ENCODE measurements at regions of chr15 and their contacts with region 1.

Region 1: GRCh38 chr15:63504247-63504978 is at the start of gene USP3:
- DNase-seq: no peak
- ATAC-seq: peak; percentile 72
- H3K4me3 ChIP-seq: peak within 1 kb of the TSS; percentile 96
- H3K27ac ChIP-seq: peak within 1 kb of the TSS; percentile 100
- H3K4me1 ChIP-seq: peaks cover 30% of the 10 kb centered on the region
- H3K27me3 ChIP-seq: no peaks in the 10 kb centered on the region
- CTCF ChIP-seq: peak in 2 of 3 experiments; percentile 30 to 39; a peak in 4 of 6 replicates
- EP300 ChIP-seq: peak in 1 of 2 experiments; percentile 50; a peak in 3 of 4 replicates
- POLR2A ChIP-seq: peak; percentile 85
- RAD21 ChIP-seq: peak; percentile 30
- polyA plus RNA-seq, gene USP3: 23.8 to 45.7 TPM

Region 2: GRCh38 chr15:63056794-63057193 is 447.6 kb before region 1 on chr15:
- CTCF ChIA-PET with region 1: no interaction called
- POLR2A ChIA-PET with region 1: no interaction called
- RAD21 ChIA-PET with region 1: no interaction called
- SMC1A ChIA-PET with region 1: no interaction called
- in situ Hi-C with region 1: no loop called
- intact Hi-C with region 1: no loop called
- DNase-seq: no peak
- ATAC-seq: no peak
- H3K4me3 ChIP-seq: no peak overlapping the region
- H3K27ac ChIP-seq: no peak overlapping the region
- H3K4me1 ChIP-seq: no peaks in the 10 kb centered on the region
- H3K27me3 ChIP-seq: no peaks in the 10 kb centered on the region
- CTCF ChIP-seq: no peak
- EP300 ChIP-seq: no peak
- POLR2A ChIP-seq: no peak
- RAD21 ChIP-seq: no peak

Region 3: GRCh38 chr15:63188926-63189871 is 315.2 kb before region 1 on chr15 and contains the start of gene RAB8B:
- CTCF ChIA-PET with region 1: interaction called, 4 read pairs
- POLR2A ChIA-PET with region 1: no interaction called
- RAD21 ChIA-PET with region 1: interaction called, 4 read pairs
- SMC1A ChIA-PET with region 1: no interaction called
- in situ Hi-C with region 1: no loop called
- intact Hi-C with region 1: loop called (anchors 10 kb)
- DNase-seq: peak; percentile 67
- ATAC-seq: peak; percentile 83
- H3K4me3 ChIP-seq: peak within 1 kb of the TSS; percentile 96
- H3K27ac ChIP-seq: peak within 1 kb of the TSS; percentile 86
- H3K4me1 ChIP-seq: peaks cover 20% of the 10 kb centered on the region
- H3K27me3 ChIP-seq: no peaks in the 10 kb centered on the region
- CTCF ChIP-seq: 0 out of 6 replicates have a peak, but pooled peaks of 1 of the 3 experiments have one; percentile 4
- EP300 ChIP-seq: 0 out of 4 replicates have a peak, but pooled peaks of 1 of the 2 experiments have one; percentile 10
- POLR2A ChIP-seq: peak; percentile 89
- RAD21 ChIP-seq: no peak
- polyA plus RNA-seq, gene RAB8B: 17.8 to 26.0 TPM

Region 4: GRCh38 chr15:63481105-63481810 is 23.2 kb before region 1 on chr15:
- CTCF ChIA-PET with region 1: interaction called, 47 read pairs
- POLR2A ChIA-PET with region 1: interaction called, 110 read pairs
- RAD21 ChIA-PET with region 1: interaction called, 197 read pairs
- SMC1A ChIA-PET with region 1: interaction called, 151 read pairs
- in situ Hi-C with region 1: no loop called
- intact Hi-C with region 1: no loop called
- DNase-seq: peak; percentile 83
- ATAC-seq: peak; percentile 60
- H3K4me3 ChIP-seq: no peak overlapping the region
- H3K27ac ChIP-seq: peak overlapping the region; percentile 77
- H3K4me1 ChIP-seq: peaks cover 88% of the 10 kb centered on the region
- H3K27me3 ChIP-seq: no peaks in the 10 kb centered on the region
- CTCF ChIP-seq: 0 out of 6 replicates have a peak, but pooled peaks of 1 of the 3 experiments have one; percentile 4
- EP300 ChIP-seq: 0 out of 4 replicates have a peak, but pooled peaks of 1 of the 2 experiments have one; percentile 23
- POLR2A ChIP-seq: no peak
- RAD21 ChIP-seq: no peak

Region 5: DNA sequence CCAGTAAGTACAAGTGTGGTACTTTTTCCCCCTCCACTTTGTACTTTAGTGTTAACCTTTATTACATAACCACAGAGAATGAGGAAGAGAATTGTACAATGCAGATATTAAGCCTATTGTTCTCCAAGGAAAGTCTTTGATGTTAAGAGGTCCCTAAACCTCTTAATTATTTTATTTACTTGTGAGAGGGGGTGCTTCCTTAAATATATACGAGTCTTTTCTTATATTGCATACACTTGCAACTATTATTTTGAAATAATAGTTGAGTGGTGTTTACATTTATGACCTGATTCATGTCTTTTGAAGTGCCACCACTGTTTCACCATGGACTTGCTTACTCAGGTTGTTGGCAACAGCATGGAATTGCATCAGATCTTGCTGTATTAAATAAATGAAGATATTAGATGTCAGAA is 10.1 kb after region 1 on chr15:
- CTCF ChIA-PET with region 1: interaction called, 17 read pairs
- POLR2A ChIA-PET with region 1: interaction called, 9 read pairs
- RAD21 ChIA-PET with region 1: interaction called, 16 read pairs
- SMC1A ChIA-PET with region 1: interaction called, 46 read pairs
- in situ Hi-C with region 1: no loop called
- intact Hi-C with region 1: no loop called
- DNase-seq: no peak
- ATAC-seq: 0 out of 3 replicates have a peak, but pooled peaks have one; percentile 12
- H3K4me3 ChIP-seq: 0 out of 2 replicates have a peak overlapping the region, but pooled peaks have one; percentile 21
- H3K27ac ChIP-seq: peak overlapping the region; percentile 67; the same call in 1 of the 2 replicates
- H3K4me1 ChIP-seq: peaks cover 45% of the 10 kb centered on the region
- H3K27me3 ChIP-seq: no peaks in the 10 kb centered on the region
- CTCF ChIP-seq: no peak
- EP300 ChIP-seq: no peak
- POLR2A ChIP-seq: no peak
- RAD21 ChIP-seq: no peak

Region 6: DNA sequence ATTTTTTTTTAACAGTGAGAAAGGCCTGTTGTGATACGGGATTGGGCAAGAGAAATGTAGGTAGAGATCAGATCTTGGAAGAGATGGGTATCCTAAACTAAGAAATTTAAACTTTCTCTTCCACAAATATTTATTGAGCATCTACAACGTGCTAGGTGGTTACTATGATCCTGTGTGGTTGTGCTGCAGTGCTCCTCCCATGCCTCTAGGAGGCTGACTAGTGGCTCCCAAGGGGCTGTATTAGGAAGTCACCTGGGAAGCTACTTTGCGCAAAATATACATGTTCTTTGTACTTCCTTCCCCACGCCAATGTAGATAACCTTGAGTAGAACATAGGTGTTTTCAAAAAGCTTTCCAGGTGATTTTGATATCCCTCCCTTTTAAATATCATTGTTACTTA is 27.2 kb after region 1 on chr15:
- CTCF ChIA-PET with region 1: interaction called, 52 read pairs
- POLR2A ChIA-PET with region 1: interaction called, 47 read pairs
- RAD21 ChIA-PET with region 1: interaction called, 75 read pairs
- SMC1A ChIA-PET with region 1: interaction called, 133 read pairs
- in situ Hi-C with region 1: no loop called
- intact Hi-C with region 1: no loop called
- DNase-seq: no peak
- ATAC-seq: peak; percentile 10; the same call in 1 of the 3 replicates
- H3K4me3 ChIP-seq: no peak overlapping the region
- H3K27ac ChIP-seq: no peak overlapping the region
- H3K4me1 ChIP-seq: peaks cover 51% of the 10 kb centered on the region
- H3K27me3 ChIP-seq: no peaks in the 10 kb centered on the region
- CTCF ChIP-seq: peak in 2 of 3 experiments; percentile 21 to 39; a peak in 2 of 6 replicates
- EP300 ChIP-seq: no peak
- POLR2A ChIP-seq: no peak
- RAD21 ChIP-seq: no peak

Region 7: GRCh38 chr15:63553388-63553791 is 49.0 kb after region 1 on chr15:
- CTCF ChIA-PET with region 1: interaction called, 8 read pairs
- POLR2A ChIA-PET with region 1: interaction called, 4 read pairs
- RAD21 ChIA-PET with region 1: interaction called, 13 read pairs
- SMC1A ChIA-PET with region 1: interaction called, 19 read pairs
- in situ Hi-C with region 1: no loop called
- intact Hi-C with region 1: no loop called
- DNase-seq: no peak
- ATAC-seq: peak; percentile 47
- H3K4me3 ChIP-seq: no peak overlapping the region
- H3K27ac ChIP-seq: no peak overlapping the region
- H3K4me1 ChIP-seq: peaks cover 5% of the 10 kb centered on the region
- H3K27me3 ChIP-seq: no peaks in the 10 kb centered on the region
- CTCF ChIP-seq: no peak
- EP300 ChIP-seq: no peak
- POLR2A ChIP-seq: no peak
- RAD21 ChIP-seq: no peak

Region 8: GRCh38 chr15:63800739-63801138 is 296.3 kb after region 1 on chr15:
- CTCF ChIA-PET with region 1: no interaction called
- POLR2A ChIA-PET with region 1: no interaction called
- RAD21 ChIA-PET with region 1: no interaction called
- SMC1A ChIA-PET with region 1: no interaction called
- in situ Hi-C with region 1: no loop called
- intact Hi-C with region 1: no loop called
- DNase-seq: no peak
- ATAC-seq: peak; percentile 79
- H3K4me3 ChIP-seq: no peak overlapping the region
- H3K27ac ChIP-seq: peak overlapping the region; percentile 6; the same call in 1 of the 2 replicates
- H3K4me1 ChIP-seq: peaks cover 40% of the 10 kb centered on the region
- H3K27me3 ChIP-seq: no peaks in the 10 kb centered on the region
- CTCF ChIP-seq: no peak
- EP300 ChIP-seq: 0 out of 4 replicates have a peak, but pooled peaks of 1 of the 2 experiments have one; percentile 8
- POLR2A ChIP-seq: no peak
- RAD21 ChIP-seq: no peak

Region 9: DNA sequence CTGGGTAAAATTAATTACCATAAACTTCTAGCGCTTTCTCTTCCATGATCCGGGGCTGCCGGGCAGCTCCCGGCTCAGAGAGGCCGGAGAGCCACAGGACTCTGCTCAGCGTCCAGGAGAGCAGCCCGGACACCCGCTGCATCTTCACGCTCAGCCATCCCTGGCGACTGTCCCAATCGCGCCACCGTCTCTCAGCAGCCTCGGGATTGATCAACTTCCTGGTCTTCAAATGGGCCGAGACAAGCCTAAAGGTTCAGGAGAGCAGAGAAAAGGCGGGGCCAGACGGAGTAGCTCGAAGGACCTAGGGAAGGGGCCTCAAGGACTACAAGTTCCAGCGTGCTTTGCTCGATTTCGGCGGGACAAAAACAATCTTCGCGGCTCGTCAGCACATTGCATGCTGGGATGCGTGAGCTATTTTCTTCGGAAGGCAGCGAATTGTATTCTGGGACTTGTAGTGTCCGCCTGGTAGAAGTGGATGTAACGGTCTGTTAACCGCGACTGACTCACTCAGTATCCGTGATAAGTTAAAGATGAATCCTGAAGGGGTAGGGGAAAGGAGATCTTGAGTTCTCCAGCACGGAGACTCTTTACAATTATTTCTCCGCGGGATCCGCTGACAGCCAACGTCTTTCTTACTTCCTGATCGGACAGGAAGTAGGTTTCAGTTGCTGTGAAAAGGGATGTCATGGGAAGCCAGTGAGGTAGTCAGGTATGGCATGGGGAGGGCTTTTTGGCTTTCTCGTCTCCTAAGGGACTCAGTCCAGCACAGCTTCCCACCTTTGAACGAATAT is 589.4 kb after region 1 on chr15 and contains the start of gene CIAO2A:
- CTCF ChIA-PET with region 1: no interaction called
- POLR2A ChIA-PET with region 1: no interaction called
- RAD21 ChIA-PET with region 1: no interaction called
- SMC1A ChIA-PET with region 1: no interaction called
- in situ Hi-C with region 1: no loop called
- intact Hi-C with region 1: loop called (anchors 10 kb)
- DNase-seq: peak; percentile 99
- ATAC-seq: peak; percentile 74
- H3K4me3 ChIP-seq: peak within 1 kb of the TSS; percentile 96
- H3K27ac ChIP-seq: peak within 1 kb of the TSS; percentile 94
- H3K4me1 ChIP-seq: peaks cover 32% of the 10 kb centered on the region
- H3K27me3 ChIP-seq: no peaks in the 10 kb centered on the region
- CTCF ChIP-seq: no peak
- EP300 ChIP-seq: no peak
- POLR2A ChIP-seq: peak; percentile 66; the same call in 1 of the 2 replicates
- RAD21 ChIP-seq: no peak
- polyA plus RNA-seq, gene CIAO2A: 264 to 303 TPM

Measured in GM12878 (cell line).